Tibial artery (tissue), 4 donors: ENCODE measurements at regions of chr13 and their contacts with region 1.

Region 1: GRCh38 chr13:62418872-62419271 is 1003.2 kb upstream of the PCDH20 start:
- DNase-seq: no peak
- H3K4me3 ChIP-seq: no peak overlapping the region
- H3K27ac ChIP-seq: no peak overlapping the region
- H3K4me1 ChIP-seq: no peaks in the 10 kb centered on the region
- H3K27me3 ChIP-seq: no peaks in the 10 kb centered on the region
- CTCF ChIP-seq: no peak

Region 2: GRCh38 chr13:62482351-62482750 is 63.5 kb after region 1 on chr13:
- intact Hi-C with region 1: no loop called
- DNase-seq: no peak
- H3K4me3 ChIP-seq: no peak overlapping the region
- H3K27ac ChIP-seq: no peak overlapping the region
- H3K4me1 ChIP-seq: peaks cover 0 to 14% (median 4%) of the 10 kb centered on the region in 4 donors
- H3K27me3 ChIP-seq: no peaks in the 10 kb centered on the region
- CTCF ChIP-seq: no peak

Region 3: GRCh38 chr13:63481334-63481733 is 1062.5 kb after region 1 on chr13:
- intact Hi-C with region 1: loop called (anchors 10 kb)
- DNase-seq: no peak
- H3K4me3 ChIP-seq: no peak overlapping the region
- H3K27ac ChIP-seq: no peak overlapping the region
- H3K4me1 ChIP-seq: no peaks in the 10 kb centered on the region
- H3K27me3 ChIP-seq: no peaks in the 10 kb centered on the region
- CTCF ChIP-seq: no peak